ENCODE measurements at regions of chr1 and their contacts with region 1.

Region 1: GRCh38 chr1:114511032-114511785 is at the start of gene TRIM33:
- DNase-seq: peak; percentile 96
- ATAC-seq: peak; percentile 97
- total RNA-seq, gene TRIM33: 14.5 TPM

Region 2: GRCh38 chr1:114428083-114428749 is 83.0 kb before region 1 on chr1:
- intact Hi-C with region 1: loop called (anchors 5 kb)
- DNase-seq: no peak
- ATAC-seq: no peak